Heart right ventricle (tissue), 16 donors: ENCODE measurements at regions of chr17 and their contacts with region 1.

Region 1: DNA sequence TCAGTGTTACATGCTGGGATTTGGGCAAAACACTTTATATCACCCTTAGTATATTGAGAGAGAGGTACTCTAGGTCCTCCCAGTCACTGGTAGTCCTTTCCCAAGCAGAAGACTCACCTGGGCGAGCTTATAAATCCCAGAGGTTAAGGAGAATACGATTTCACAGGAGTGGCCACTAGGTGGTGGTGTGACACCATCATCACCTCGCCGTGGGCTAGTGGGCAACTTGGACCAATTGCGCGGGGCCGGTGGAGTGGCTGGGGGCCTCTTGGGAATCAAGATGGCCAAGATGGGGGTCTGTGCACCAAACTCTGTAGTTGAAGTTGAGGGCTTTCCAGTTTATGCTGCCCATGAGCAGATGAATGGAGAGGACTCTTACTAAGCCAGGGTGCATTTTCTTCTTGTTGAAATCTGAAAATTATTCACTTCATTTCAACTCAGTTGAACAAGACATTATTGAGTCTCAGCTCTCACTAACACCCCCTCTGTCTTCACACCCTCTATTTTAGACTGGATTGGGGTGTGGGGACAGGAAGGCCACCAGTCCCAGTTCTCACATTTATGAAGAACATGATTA is 38.2 kb upstream of the PIRT start:
- DNase-seq: peak; percentile 21 to 32
- ATAC-seq: peak in 1 of 8 donors; percentile 50
- H3K4me3 ChIP-seq: no peak overlapping the region
- H3K27ac ChIP-seq: no peak overlapping the region
- H3K4me1 ChIP-seq: no peaks in the 10 kb centered on the region
- H3K27me3 ChIP-seq: peaks cover 0 to 38% (median 18%) of the 10 kb centered on the region in 7 donors
- CTCF ChIP-seq: peak; percentile 31 to 76 (median 66)

Region 2: DNA sequence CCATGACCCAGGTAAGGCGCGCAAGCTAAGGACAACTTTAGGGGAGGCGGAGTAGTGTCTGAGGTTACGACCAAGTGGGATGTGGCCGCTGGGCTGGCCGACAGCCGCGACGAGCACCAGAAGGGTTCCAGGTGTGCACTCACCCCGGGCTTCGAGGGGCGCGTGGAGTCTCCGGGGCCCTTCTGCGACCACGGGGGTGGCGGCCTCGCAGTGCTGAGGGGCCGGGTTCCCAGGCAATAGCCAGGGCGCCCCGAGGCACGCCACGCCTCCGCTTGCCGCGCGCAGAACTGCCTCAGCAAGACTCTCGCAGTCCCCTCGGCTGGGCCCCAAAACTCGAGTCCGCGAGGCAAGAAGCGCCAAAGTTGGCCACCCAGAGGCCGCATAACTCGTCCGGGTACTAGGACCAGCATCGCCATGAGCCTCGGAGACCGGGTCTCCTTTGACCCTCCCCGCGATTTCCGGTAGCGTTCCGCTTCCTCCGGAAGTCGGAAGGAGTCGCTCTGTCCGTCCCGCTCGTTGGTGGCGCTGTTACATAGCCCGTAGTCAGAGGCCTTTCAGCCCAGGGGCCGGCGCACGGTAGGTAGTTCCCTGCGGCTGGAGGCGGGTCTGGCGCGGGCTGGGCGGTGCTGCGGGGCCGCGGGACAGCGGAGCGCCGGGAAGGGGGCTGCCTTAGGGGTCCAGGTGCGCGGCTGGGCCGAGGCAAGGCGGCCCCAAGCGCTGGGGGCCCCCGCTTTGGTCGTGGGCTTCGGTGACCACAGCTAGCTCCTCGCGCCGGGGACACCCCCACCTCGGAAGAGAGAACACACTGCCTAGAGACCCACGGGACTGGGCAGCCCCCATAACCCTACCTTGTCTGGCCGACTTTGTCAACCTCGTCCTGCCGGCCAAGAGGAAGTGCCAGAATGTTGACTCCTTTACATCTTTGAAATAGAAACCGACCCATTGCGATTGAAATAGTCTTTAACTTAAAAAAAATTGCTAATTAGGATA is 178.7 kb before region 1 on chr17 and contains the starts of genes ADPRM and SCO1:
- intact Hi-C with region 1: no loop called
- DNase-seq: peak; percentile 92 to 94
- ATAC-seq: peak; percentile 99 to 100 (median 99)
- H3K4me3 ChIP-seq: peak within 1 kb of the TSS; percentile 84 to 99 (median 91)
- H3K27ac ChIP-seq: peak within 1 kb of the TSS; percentile 77 to 98 (median 94)
- H3K4me1 ChIP-seq: peaks cover 6 to 40% (median 25%) of the 10 kb centered on the region in 9 donors
- H3K27me3 ChIP-seq: no peaks in the 10 kb centered on the region
- CTCF ChIP-seq: peak in 8 of 9 donors; percentile 12 to 69 (median 49)
- total RNA-seq, gene ADPRM: 3.6 to 7.3 (median 4.9) TPM
- total RNA-seq, gene SCO1: 28.5 to 43.4 (median 37.4) TPM

Region 3: GRCh38 chr17:10984220-10984619 is 108.2 kb after region 1 on chr17:
- intact Hi-C with region 1: no loop called
- DNase-seq: no peak
- ATAC-seq: no peak
- H3K4me3 ChIP-seq: no peak overlapping the region
- H3K27ac ChIP-seq: no peak overlapping the region
- H3K4me1 ChIP-seq: no peaks in the 10 kb centered on the region
- H3K27me3 ChIP-seq: peaks cover 0 to 5% (median 0%) of the 10 kb centered on the region in 7 donors
- CTCF ChIP-seq: no peak

Region 4: GRCh38 chr17:11144358-11145233 is 268.5 kb after region 1 on chr17:
- intact Hi-C with region 1: loop called in 9 of 10 experiments (anchors 1 to 10 kb)
- DNase-seq: peak in 1 of 2 donors; percentile 27
- ATAC-seq: peak in 2 of 8 donors; percentile 39 to 48
- H3K4me3 ChIP-seq: no peak overlapping the region
- H3K27ac ChIP-seq: no peak overlapping the region
- H3K4me1 ChIP-seq: peaks cover 0 to 8% (median 0%) of the 10 kb centered on the region in 9 donors
- H3K27me3 ChIP-seq: peaks cover 0 to 3% (median 0%) of the 10 kb centered on the region in 7 donors
- CTCF ChIP-seq: peak; percentile 16 to 77 (median 66)

Region 5: GRCh38 chr17:11296994-11297393 is 420.9 kb after region 1 on chr17:
- intact Hi-C with region 1: loop called in 1 of 10 experiments (anchors 10 kb)
- DNase-seq: no peak
- ATAC-seq: no peak
- H3K4me3 ChIP-seq: no peak overlapping the region
- H3K27ac ChIP-seq: no peak overlapping the region
- H3K4me1 ChIP-seq: no peaks in the 10 kb centered on the region
- H3K27me3 ChIP-seq: peaks cover 0 to 23% (median 0%) of the 10 kb centered on the region in 7 donors
- CTCF ChIP-seq: peak in 3 of 9 donors; percentile 13 to 37 (median 35)

Region 6: DNA sequence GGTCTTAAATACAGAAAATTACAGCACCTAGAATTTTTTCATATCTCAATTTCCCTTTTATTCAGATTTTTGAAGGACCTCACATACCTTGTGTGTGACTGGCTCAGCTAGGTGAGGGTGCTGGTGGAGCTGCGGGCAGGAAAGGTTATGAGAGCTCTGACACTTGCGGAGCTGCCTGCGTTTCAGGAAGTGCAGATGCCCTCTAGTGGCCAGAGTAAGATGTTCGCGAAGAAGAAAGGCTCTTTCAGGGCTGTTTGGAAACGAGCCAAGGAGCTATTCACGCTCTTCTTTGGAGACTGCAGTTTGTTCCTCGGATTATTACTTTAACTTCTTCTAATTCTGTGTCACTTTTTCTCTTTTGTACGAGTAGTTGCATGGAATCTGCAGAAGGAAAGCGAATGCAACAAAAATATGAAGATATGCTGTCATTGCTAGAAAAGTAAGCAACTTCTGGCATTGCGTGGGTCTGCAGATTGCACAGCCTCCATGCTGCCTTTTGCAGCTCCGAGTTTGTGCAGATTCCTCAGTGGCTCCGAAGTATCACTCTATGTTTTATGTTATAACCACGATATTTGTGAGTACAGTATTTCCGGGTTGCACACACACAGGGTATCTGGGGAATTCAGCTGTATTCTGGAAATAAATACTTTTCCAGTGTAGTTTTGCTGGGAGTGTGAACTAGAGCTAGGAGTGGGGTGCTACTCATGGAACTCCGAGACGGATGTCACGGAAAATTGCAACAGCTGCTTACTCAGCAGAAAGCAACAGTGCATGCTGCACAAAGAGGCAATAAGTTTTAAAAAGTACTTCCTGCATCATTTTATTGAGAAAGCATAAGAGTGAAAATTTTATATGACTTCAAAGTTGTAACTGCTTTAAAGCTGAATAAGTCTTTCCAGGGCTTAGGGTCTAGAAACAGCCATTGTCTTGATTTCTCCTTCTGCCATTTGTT is 768.5 kb after region 1 on chr17:
- intact Hi-C with region 1: loop called in 5 of 10 experiments (anchors 5 to 10 kb)
- DNase-seq: peak; percentile 23 to 77
- ATAC-seq: peak in 6 of 8 donors; percentile 48 to 75 (median 64)
- H3K4me3 ChIP-seq: peak overlapping the region in 3 of 10 donors; percentile 6 to 32 (median 19)
- H3K27ac ChIP-seq: no peak overlapping the region
- H3K4me1 ChIP-seq: peaks cover 0 to 7% (median 0%) of the 10 kb centered on the region in 9 donors
- H3K27me3 ChIP-seq: peaks cover 0 to 13% (median 0%) of the 10 kb centered on the region in 7 donors
- CTCF ChIP-seq: peak; percentile 55 to 91 (median 82)

Region 7: GRCh38 chr17:11880714-11881113 is 1004.6 kb after region 1 on chr17:
- intact Hi-C with region 1: loop called in 1 of 10 experiments (anchors 5 kb)
- DNase-seq: peak in 1 of 2 donors; percentile 7
- ATAC-seq: peak in 4 of 8 donors; percentile 35 to 58 (median 46)
- H3K4me3 ChIP-seq: no peak overlapping the region
- H3K27ac ChIP-seq: no peak overlapping the region
- H3K4me1 ChIP-seq: peaks cover 0 to 3% (median 0%) of the 10 kb centered on the region in 9 donors
- H3K27me3 ChIP-seq: no peaks in the 10 kb centered on the region
- CTCF ChIP-seq: peak in 8 of 9 donors; percentile 15 to 61 (median 40)

Region 8: GRCh38 chr17:11935734-11936406 is 1059.8 kb after region 1 on chr17:
- intact Hi-C with region 1: loop called in 6 of 10 experiments (anchors 5 to 10 kb)
- DNase-seq: peak in 1 of 2 donors; percentile 51
- ATAC-seq: no peak
- H3K4me3 ChIP-seq: no peak overlapping the region
- H3K27ac ChIP-seq: no peak overlapping the region
- H3K4me1 ChIP-seq: no peaks in the 10 kb centered on the region
- H3K27me3 ChIP-seq: peaks cover 0 to 12% (median 3%) of the 10 kb centered on the region in 7 donors
- CTCF ChIP-seq: peak; percentile 77 to 94 (median 86)

Region 9: GRCh38 chr17:11986942-11987329 is 1110.9 kb after region 1 on chr17:
- intact Hi-C with region 1: loop called in 6 of 10 experiments (anchors 5 to 10 kb)
- DNase-seq: peak in 1 of 2 donors; percentile 5
- ATAC-seq: peak in 6 of 8 donors; percentile 50 to 77 (median 62)
- H3K4me3 ChIP-seq: no peak overlapping the region
- H3K27ac ChIP-seq: peak overlapping the region in 4 of 10 donors; percentile 20 to 64 (median 50)
- H3K4me1 ChIP-seq: peaks cover 0 to 15% (median 4%) of the 10 kb centered on the region in 9 donors
- H3K27me3 ChIP-seq: no peaks in the 10 kb centered on the region
- CTCF ChIP-seq: peak; percentile 23 to 71 (median 61)